Activated B cell treated with CpG ODN at 0.5 μM for 24 hours (primary cell): ENCODE measurements at regions of chr16 and their contacts with region 1.

Region 1: DNA sequence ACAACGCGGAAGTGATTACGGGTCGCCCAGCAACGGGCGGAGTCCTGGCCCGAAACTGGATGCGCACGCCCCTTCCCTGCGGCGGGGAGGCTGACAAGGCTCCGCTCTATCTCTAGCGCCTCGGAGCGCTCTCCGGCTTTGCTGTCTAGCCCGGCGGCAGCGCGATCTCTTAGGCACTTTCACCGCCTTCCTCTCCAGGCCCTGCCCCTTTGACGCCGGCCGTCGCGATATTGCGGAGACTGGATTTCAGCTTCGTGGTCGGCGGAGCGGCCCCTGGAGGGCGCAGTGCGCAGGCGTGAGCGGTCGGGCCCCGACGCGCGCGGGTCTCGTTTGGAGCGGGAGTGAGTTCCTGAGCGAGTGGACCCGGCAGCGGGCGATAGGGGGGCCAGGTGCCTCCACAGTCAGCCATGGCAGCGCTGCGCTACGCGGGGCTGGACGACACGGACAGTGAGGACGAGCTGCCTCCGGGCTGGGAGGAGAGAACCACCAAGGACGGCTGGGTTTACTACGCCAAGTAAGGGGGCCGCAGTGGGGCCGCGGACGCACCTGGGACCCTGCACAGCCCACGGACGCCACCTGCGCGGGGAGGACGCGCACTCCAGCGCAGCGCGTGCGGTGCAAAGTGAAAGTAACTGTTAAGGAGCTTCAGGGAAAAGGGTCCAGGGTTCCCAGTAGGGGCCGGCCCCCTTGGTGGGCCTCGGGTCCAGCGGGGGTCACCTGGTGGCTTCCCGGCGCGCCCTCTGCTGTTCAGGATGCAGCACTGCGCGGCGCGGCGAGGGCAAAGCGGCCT is at the start of gene WWOX:
- DNase-seq: peak; percentile 93
- ATAC-seq: peak; percentile 94
- H3K4me3 Mint-ChIP-seq: peak within 1 kb of the TSS; percentile 92
- H3K27ac Mint-ChIP-seq: peak within 1 kb of the TSS; percentile 92
- H3K4me1 Mint-ChIP-seq: peaks cover 15% of the 10 kb centered on the region
- H3K27me3 Mint-ChIP-seq: peaks cover 3% of the 10 kb centered on the region
- CTCF ChIP-seq: peak; percentile 23
- total RNA-seq, gene WWOX: 15.6 and 22.6 TPM in 2 replicates

Region 2: GRCh38 chr16:77211880-77212740 is 887.5 kb before region 1 on chr16:
- CTCF ChIA-PET with region 1: no interaction called
- POLR2A ChIA-PET with region 1: no interaction called
- intact Hi-C with region 1: loop called (anchors 5 kb)
- DNase-seq: peak; percentile 63
- ATAC-seq: peak; percentile 71
- H3K4me3 Mint-ChIP-seq: peak overlapping the region; percentile 89
- H3K27ac Mint-ChIP-seq: peak overlapping the region; percentile 37
- H3K4me1 Mint-ChIP-seq: peaks cover 9% of the 10 kb centered on the region
- H3K27me3 Mint-ChIP-seq: no peaks in the 10 kb centered on the region
- CTCF ChIP-seq: no peak

Region 3: DNA sequence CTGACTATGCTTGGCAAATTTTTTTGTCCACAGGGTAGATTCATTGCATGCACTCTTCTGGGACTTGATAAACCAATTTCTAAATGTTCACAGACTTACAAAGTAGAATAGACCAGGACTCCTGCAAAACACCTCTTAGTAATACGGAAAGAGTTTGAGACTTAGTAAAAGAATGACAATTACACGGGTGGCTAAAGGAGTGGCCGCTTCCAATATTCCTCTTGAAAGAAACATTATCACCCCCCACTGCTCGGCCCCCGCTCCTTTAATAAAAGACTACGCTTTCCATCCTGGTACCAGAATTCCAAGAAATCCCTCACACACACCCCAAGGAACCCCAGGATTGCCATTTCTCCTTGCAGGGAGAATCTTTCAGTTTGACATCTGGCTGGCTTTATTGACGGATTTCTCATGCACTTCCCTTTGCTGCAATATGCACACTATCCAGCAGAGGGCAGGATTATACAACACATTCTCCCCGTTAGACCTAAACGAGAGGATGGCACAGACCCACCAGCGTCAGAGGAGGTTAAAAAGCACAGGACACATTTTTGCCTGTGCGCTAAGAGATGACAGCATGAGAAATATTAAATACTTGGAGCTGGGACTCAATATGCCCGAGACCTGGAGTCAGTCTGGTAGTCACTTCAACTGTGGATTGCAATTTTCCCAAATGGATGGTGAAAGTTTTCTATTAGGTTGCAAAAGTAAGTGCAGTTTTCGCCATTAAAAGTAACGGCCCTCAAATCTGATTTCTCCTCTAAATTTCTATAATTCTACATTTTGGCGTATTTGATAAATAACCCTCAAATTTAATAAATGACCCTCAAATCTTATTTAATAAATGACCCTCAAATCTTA is 423.9 kb before region 1 on chr16:
- CTCF ChIA-PET with region 1: interaction called, 3 read pairs
- POLR2A ChIA-PET with region 1: no interaction called
- intact Hi-C with region 1: loop called (anchors 1 kb)
- DNase-seq: no peak
- ATAC-seq: peak; percentile 62
- H3K4me3 Mint-ChIP-seq: no peak overlapping the region
- H3K27ac Mint-ChIP-seq: no peak overlapping the region
- H3K4me1 Mint-ChIP-seq: peaks cover 8% of the 10 kb centered on the region
- H3K27me3 Mint-ChIP-seq: no peaks in the 10 kb centered on the region
- CTCF ChIP-seq: peak; percentile 32

Region 4: GRCh38 chr16:77722309-77723107 is 377.1 kb before region 1 on chr16 and contains the start of gene NUDT7:
- CTCF ChIA-PET with region 1: no interaction called
- POLR2A ChIA-PET with region 1: interaction called, 6 read pairs
- intact Hi-C with region 1: loop called (anchors 1 kb)
- DNase-seq: peak; percentile 93
- ATAC-seq: peak; percentile 98
- H3K4me3 Mint-ChIP-seq: peak within 1 kb of the TSS; percentile 90
- H3K27ac Mint-ChIP-seq: peak within 1 kb of the TSS; percentile 88
- H3K4me1 Mint-ChIP-seq: peaks cover 10% of the 10 kb centered on the region
- H3K27me3 Mint-ChIP-seq: no peaks in the 10 kb centered on the region
- CTCF ChIP-seq: no peak
- total RNA-seq, gene NUDT7: 4.0 and 4.7 TPM in 2 replicates

Region 5: DNA sequence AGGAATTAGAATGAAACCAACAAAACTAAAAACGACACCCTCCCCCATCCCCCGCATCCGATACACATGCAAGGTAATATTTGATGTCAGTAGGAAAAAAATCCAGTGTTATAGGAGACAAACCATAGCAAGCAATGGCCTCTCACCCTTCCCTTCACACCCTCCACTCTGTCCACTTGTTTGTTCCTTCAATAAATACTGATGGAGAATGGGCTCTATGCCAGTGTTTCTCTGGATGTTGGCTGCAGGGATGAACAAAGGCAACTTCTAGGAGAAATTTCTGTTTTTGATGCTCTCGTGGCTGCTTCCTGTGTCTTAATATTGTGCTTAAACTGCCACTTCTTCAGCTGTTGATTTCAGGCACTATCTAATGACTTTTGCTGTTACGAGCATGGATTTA is 98.7 kb after region 1 on chr16:
- CTCF ChIA-PET with region 1: no interaction called
- POLR2A ChIA-PET with region 1: no interaction called
- intact Hi-C with region 1: no loop called
- DNase-seq: no peak
- ATAC-seq: no peak
- H3K4me3 Mint-ChIP-seq: no peak overlapping the region
- H3K27ac Mint-ChIP-seq: no peak overlapping the region
- H3K4me1 Mint-ChIP-seq: peaks cover 14% of the 10 kb centered on the region
- H3K27me3 Mint-ChIP-seq: no peaks in the 10 kb centered on the region
- CTCF ChIP-seq: no peak

Region 6: DNA sequence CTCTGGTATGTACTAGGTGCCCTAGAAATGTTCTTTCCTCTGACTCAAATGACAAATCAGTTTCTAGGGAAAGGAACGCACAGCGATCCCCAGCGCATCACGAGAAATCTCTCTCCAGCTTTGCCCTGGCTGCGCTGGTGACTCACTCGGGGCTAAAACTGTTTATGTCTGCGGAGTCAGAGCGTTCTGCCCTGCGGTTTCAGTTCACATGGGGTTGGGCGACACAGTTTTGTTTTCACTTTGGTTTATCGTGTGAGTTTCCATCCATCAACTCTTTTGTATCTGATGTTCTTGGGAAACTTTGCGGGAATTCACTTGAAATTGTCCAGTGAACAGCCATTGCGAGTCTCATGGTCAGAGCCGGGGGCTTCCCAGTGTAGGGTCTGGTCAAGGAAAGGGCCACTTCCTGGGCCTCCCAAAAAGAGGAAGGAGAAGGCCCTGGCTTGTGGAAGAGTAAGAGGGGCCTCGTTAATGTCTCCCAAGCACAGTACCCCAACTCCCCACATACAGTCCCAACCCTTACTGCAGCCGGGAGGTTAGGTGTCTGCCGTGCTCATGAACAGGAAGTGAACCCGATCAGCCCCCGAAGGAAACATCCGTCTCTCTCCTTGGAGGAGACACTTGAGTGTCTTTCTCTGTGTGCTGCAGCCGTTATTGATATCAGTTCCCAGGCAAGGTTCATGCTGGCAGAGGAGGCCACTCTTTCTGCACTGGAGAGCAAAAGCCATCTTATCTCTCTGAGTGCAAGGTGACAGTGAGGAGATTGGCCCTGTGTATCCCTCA is 643.1 kb after region 1 on chr16:
- CTCF ChIA-PET with region 1: no interaction called
- POLR2A ChIA-PET with region 1: no interaction called
- intact Hi-C with region 1: loop called (anchors 10 kb)
- DNase-seq: peak; percentile 36
- ATAC-seq: peak; percentile 92
- H3K4me3 Mint-ChIP-seq: peak overlapping the region; percentile 81
- H3K27ac Mint-ChIP-seq: peak overlapping the region; percentile 91
- H3K4me1 Mint-ChIP-seq: peaks cover 47% of the 10 kb centered on the region
- H3K27me3 Mint-ChIP-seq: no peaks in the 10 kb centered on the region
- CTCF ChIP-seq: no peak

Region 7: GRCh38 chr16:79770244-79771064 is 1670.9 kb after region 1 on chr16:
- CTCF ChIA-PET with region 1: no interaction called
- POLR2A ChIA-PET with region 1: no interaction called
- intact Hi-C with region 1: loop called (anchors 1 kb)
- DNase-seq: peak; percentile 46
- ATAC-seq: peak; percentile 98
- H3K4me3 Mint-ChIP-seq: peak overlapping the region; percentile 87
- H3K27ac Mint-ChIP-seq: peak overlapping the region; percentile 15
- H3K4me1 Mint-ChIP-seq: peaks cover 31% of the 10 kb centered on the region
- H3K27me3 Mint-ChIP-seq: peaks cover 15% of the 10 kb centered on the region
- CTCF ChIP-seq: no peak